ENCODE measurements at regions of chr16 and their contacts with region 1.

Region 1: DNA sequence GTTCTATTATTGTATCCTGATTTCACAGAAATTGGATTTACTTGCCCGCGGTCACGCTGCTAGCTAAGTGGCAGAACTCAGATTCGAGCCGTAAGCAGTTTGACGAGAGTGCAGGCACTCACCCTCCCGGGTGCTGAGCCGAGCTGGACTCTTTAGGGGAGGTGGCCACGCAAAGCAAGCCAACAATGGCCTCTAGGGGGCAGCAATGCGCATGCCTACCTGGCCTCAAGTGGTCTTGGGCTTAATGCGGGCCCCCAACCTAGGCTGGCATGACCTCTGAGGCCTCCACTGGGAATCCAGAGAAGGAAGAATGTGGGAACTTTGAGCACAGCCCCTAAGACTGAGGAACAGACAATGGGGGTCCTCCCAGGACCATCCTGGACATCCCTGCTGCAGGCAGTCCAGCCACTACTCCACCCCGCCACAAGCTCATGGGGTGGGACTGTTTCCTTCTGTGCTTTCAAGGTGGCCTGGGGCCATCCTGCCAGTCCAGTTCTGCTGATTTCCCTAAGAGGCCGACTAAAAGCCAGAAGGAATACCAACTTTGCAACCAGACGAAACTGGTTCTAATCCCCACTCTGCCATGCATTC is 276.5 kb downstream of the XYLT1 start:
- DNase-seq: peak; percentile 78
- H3K4me3 ChIP-seq: no peak overlapping the region
- H3K27ac ChIP-seq: no peak overlapping the region
- H3K4me1 ChIP-seq: no peaks in the 10 kb centered on the region
- H3K27me3 ChIP-seq: no peaks in the 10 kb centered on the region
- CTCF ChIP-seq: peak in 3 of 4 experiments; percentile 49 to 66 (median 65)
- EP300 ChIP-seq: no peak
- POLR2A ChIP-seq: no peak

Region 2: DNA sequence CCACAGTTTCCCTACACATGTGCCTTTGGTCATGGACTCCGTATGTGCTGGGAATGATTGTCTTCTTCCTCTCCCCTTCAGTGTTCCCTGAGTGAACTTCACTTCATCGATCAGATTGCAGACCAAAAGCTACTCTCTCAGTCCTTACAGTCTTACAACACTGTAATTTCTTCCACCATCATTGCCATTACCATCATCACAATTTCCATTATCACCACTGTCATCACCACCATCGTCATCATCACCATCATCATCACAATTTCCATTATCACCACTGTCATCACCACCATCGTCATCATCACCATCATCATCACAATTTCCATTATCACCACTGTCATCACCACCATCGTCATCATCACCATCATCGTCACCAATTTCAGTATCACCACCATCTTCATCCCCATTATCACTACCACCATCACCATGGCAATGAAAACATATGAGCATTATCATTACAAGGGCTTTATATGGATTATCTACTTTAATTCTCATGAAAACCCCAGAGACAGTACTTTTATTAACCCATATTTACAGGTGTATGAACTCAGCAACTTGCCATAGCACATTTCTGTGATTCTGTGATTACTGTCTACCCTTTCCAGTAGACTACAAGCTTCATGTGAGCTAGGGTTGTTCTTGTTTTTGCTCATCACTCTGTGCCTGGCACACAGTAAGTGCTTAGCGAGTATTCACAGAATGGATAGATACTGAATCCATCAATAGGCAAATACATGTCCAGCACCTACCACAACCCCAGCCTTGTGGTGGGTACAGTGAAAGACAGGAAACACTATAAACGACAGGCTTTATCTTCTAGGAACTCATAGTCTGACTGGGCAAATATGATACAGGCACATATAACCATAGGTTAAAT is 50.5 kb before region 1 on chr16:
- intact Hi-C with region 1: no loop called
- DNase-seq: no peak
- H3K4me3 ChIP-seq: no peak overlapping the region
- H3K27ac ChIP-seq: no peak overlapping the region
- H3K4me1 ChIP-seq: no peaks in the 10 kb centered on the region
- H3K27me3 ChIP-seq: no peaks in the 10 kb centered on the region
- CTCF ChIP-seq: no peak
- EP300 ChIP-seq: no peak
- POLR2A ChIP-seq: no peak

Region 3: GRCh38 chr16:17585449-17586074 is 391.3 kb after region 1 on chr16:
- intact Hi-C with region 1: loop called (anchors 10 kb)
- DNase-seq: no peak
- H3K4me3 ChIP-seq: no peak overlapping the region
- H3K27ac ChIP-seq: no peak overlapping the region
- H3K4me1 ChIP-seq: no peaks in the 10 kb centered on the region
- H3K27me3 ChIP-seq: no peaks in the 10 kb centered on the region
- CTCF ChIP-seq: no peak
- EP300 ChIP-seq: no peak
- POLR2A ChIP-seq: no peak

Measured in sigmoid colon (tissue), 7 donors.